ENCODE measurements at regions of chr16 and their contacts with region 1.

Region 1: GRCh38 chr16:16127469-16128116 is 95.7 kb downstream of the ABCC6 start:
- DNase-seq: peak; percentile 59
- ATAC-seq: peak; percentile 92
- H3K4me3 Mint-ChIP-seq: no peak overlapping the region
- H3K27ac Mint-ChIP-seq: no peak overlapping the region
- H3K4me1 Mint-ChIP-seq: peaks cover 4% of the 10 kb centered on the region
- H3K27me3 Mint-ChIP-seq: no peaks in the 10 kb centered on the region
- CTCF ChIP-seq: peak; percentile 57

Region 2: GRCh38 chr16:15427648-15428239 is 699.8 kb before region 1 on chr16:
- CTCF ChIA-PET with region 1: no interaction called
- POLR2A ChIA-PET with region 1: no interaction called
- intact Hi-C with region 1: loop called (anchors 2 kb)
- DNase-seq: peak; percentile 22
- ATAC-seq: peak; percentile 67
- H3K4me3 Mint-ChIP-seq: no peak overlapping the region
- H3K27ac Mint-ChIP-seq: no peak overlapping the region
- H3K4me1 Mint-ChIP-seq: peaks cover 3% of the 10 kb centered on the region
- H3K27me3 Mint-ChIP-seq: peaks cover 2% of the 10 kb centered on the region
- CTCF ChIP-seq: no peak

Region 3: DNA sequence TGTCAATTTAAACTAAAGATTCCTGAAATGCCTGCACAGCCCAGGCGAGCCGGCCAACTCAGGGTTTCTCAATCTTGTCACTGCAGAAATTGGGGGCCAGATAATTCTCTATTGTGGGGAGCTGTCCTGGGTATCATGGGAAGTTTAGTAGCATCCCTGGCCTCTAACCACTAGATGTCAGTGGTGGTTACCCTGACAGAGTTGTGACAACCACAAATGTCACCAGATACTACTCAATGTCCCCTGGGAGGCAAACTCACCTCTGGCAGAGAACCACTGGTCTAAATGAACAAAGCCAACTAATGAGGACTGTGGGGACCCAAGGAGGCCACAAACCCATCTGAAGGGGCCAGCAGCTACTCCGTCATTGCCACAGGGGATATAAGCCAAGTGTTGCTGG is 361.7 kb before region 1 on chr16:
- CTCF ChIA-PET with region 1: interaction called, 14 read pairs
- POLR2A ChIA-PET with region 1: no interaction called
- intact Hi-C with region 1: loop called (anchors 1 kb)
- DNase-seq: peak; percentile 22
- ATAC-seq: peak; percentile 99
- H3K4me3 Mint-ChIP-seq: no peak overlapping the region
- H3K27ac Mint-ChIP-seq: no peak overlapping the region
- H3K4me1 Mint-ChIP-seq: peaks cover 3% of the 10 kb centered on the region
- H3K27me3 Mint-ChIP-seq: peaks cover 16% of the 10 kb centered on the region
- CTCF ChIP-seq: no peak

Region 4: DNA sequence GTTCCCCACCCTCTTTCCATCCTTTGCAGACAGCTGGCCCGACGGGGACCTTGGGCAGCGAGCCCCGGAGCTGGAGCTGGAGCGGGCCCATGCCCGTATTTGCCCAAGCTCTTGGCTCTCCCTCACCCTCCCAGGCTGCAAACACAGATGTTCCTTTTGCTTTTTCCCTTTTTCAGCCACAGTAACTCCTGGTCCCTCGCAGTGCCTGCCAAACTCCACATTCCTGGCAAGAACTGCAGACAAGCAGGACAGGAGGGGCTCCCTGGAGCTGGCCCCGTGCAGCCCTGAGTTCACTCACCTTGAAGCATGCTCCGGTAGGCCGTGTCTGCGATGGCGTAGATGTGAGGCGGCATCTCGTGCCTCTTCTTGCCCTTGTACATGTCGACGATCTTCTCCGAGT is 304.6 kb before region 1 on chr16:
- CTCF ChIA-PET with region 1: no interaction called
- POLR2A ChIA-PET with region 1: no interaction called
- intact Hi-C with region 1: loop called (anchors 5 kb)
- DNase-seq: no peak
- ATAC-seq: no peak
- H3K4me3 Mint-ChIP-seq: no peak overlapping the region
- H3K27ac Mint-ChIP-seq: no peak overlapping the region
- H3K4me1 Mint-ChIP-seq: no peaks in the 10 kb centered on the region
- H3K27me3 Mint-ChIP-seq: no peaks in the 10 kb centered on the region
- CTCF ChIP-seq: no peak

Region 5: GRCh38 chr16:15843635-15844279 is 283.8 kb before region 1 on chr16:
- CTCF ChIA-PET with region 1: no interaction called
- POLR2A ChIA-PET with region 1: no interaction called
- intact Hi-C with region 1: no loop called
- DNase-seq: no peak
- ATAC-seq: no peak
- H3K4me3 Mint-ChIP-seq: no peak overlapping the region
- H3K27ac Mint-ChIP-seq: no peak overlapping the region
- H3K4me1 Mint-ChIP-seq: no peaks in the 10 kb centered on the region
- H3K27me3 Mint-ChIP-seq: peaks cover 3% of the 10 kb centered on the region
- CTCF ChIP-seq: no peak

Region 6: DNA sequence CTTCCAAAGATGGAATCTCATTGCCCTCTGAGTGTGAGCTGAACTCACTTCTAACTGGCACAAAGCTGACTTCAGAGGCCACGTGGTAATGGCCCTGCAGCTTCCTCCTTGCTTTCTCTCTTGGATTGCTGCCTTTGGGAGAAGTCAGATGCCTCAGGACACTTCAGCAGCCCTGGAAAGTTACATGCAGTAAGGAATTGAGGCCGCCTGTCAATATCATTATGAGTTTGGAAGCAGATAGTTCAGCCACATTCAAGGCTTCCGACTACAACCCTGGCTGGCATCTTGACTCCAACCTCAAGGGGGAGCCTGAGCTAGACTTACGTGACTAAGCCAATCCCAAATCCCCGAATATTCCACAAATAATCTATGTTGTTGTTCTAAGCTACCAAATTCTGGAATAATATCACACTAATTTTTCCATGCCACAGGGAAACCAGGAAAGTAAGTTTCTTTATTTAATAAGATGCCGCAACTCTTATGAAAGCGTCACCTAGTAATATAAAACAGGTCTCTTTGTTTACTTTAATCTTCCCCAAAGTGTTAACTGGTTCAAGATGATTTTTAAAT is 252.8 kb before region 1 on chr16:
- CTCF ChIA-PET with region 1: interaction called, 21 read pairs
- POLR2A ChIA-PET with region 1: no interaction called
- intact Hi-C with region 1: loop called (anchors 1 kb)
- DNase-seq: no peak
- ATAC-seq: no peak
- H3K4me3 Mint-ChIP-seq: no peak overlapping the region
- H3K27ac Mint-ChIP-seq: no peak overlapping the region
- H3K4me1 Mint-ChIP-seq: no peaks in the 10 kb centered on the region
- H3K27me3 Mint-ChIP-seq: no peaks in the 10 kb centered on the region
- CTCF ChIP-seq: no peak

Region 7: GRCh38 chr16:16033208-16033717 is 94.3 kb before region 1 on chr16:
- CTCF ChIA-PET with region 1: no interaction called
- POLR2A ChIA-PET with region 1: no interaction called
- intact Hi-C with region 1: loop called (anchors 10 kb)
- DNase-seq: no peak
- ATAC-seq: peak; percentile 47
- H3K4me3 Mint-ChIP-seq: no peak overlapping the region
- H3K27ac Mint-ChIP-seq: peak overlapping the region; percentile 66
- H3K4me1 Mint-ChIP-seq: peaks cover 16% of the 10 kb centered on the region
- H3K27me3 Mint-ChIP-seq: no peaks in the 10 kb centered on the region
- CTCF ChIP-seq: no peak

Region 8: DNA sequence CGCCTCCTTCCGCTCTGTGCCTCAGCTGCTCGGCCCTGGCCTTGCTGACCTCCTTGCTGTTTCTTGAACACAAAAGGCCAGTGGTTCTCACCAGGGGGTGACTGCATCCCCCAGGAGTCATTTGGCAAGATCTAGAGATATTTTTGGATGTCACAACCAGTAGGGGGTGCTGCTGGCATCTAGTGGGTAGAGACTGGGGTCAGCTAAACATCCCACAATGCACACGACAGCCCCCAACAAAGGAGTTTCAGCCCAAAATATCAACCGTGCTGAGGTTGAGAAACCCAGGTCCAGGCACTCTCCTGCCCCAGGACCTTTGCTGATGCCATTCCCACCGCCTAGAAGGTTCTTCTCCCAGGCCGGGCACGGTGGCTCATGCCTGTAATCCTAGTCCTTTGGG is 56.0 kb after region 1 on chr16:
- CTCF ChIA-PET with region 1: no interaction called
- POLR2A ChIA-PET with region 1: no interaction called
- intact Hi-C with region 1: loop called (anchors 10 kb)
- DNase-seq: no peak
- ATAC-seq: no peak
- H3K4me3 Mint-ChIP-seq: no peak overlapping the region
- H3K27ac Mint-ChIP-seq: no peak overlapping the region
- H3K4me1 Mint-ChIP-seq: no peaks in the 10 kb centered on the region
- H3K27me3 Mint-ChIP-seq: peaks cover 6% of the 10 kb centered on the region
- CTCF ChIP-seq: no peak

Measured in activated B cell treated with CpG ODN at 0.5 μM for 24 hours (primary cell).